HepG2 (cell line): ENCODE measurements at regions of chr20 and their contacts with region 1.

Region 1: GRCh38 chr20:59222253-59223181 is 58.9 kb downstream of the ZNF831 start:
- DNase-seq: peak; percentile 55
- ATAC-seq: peak; percentile 98
- H3K4me3 ChIP-seq: peak overlapping the region; percentile 20 to 51 (median 46); a peak in 4 of 6 replicates
- H3K27ac ChIP-seq: no peak overlapping the region
- H3K4me1 ChIP-seq: peaks cover 6% of the 10 kb centered on the region; the same call in 1 of the 2 replicates
- H3K27me3 ChIP-seq: peaks cover 13 to 68% of the 10 kb centered on the region in 2 experiments
- CTCF ChIP-seq: peak; percentile 95
- EP300 ChIP-seq: no peak
- POLR2A ChIP-seq: no peak
- RAD21 ChIP-seq: peak; percentile 93

Region 2: DNA sequence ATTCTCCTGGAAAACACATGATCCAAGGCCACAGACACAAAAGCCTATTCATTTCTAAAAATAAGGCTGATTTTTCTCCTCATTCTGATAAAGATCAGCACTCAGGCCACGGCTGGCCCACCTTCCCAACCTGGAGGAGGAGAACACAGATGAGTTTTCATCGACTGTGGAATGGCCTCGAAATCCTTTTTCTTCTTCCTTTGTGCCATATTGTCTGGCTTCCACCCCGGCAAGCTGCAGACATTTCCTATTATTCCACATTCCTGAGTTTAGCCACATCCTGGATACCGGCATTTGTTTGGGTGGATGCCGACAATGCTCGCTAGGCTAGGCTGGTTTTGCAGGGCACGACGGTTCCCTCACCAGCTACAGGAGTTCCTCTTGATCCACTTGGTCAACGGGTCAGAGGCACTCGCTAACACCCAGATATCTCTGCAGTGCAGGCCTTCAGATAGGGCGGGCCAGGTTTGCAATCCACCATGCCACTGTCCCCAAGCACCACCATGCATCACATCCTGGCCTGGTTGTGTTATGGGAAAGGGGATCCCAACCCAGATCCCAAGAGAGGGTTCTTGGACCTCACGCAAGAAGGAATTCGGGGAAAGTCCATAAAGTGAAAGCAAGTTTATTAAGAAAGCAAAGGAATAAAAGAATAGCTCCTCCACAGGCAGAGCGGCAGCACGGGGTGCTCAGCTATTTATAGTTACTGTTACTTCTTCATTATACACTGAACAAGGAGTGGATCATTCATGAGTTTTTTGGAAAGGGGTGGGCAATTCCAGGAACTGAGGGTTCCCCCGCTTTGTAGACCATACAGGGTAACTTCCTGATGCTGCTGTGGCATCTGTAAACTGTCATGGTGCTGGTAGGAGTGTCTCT is 211.3 kb before region 1 on chr20:
- CTCF ChIA-PET with region 1: no interaction called
- POLR2A ChIA-PET with region 1: no interaction called
- in situ Hi-C with region 1: no loop called
- intact Hi-C with region 1: no loop called
- DNase-seq: peak; percentile 78
- ATAC-seq: peak; percentile 1; the same call in 1 of the 3 replicates
- H3K4me3 ChIP-seq: no peak overlapping the region
- H3K27ac ChIP-seq: peak overlapping the region; percentile 12
- H3K4me1 ChIP-seq: peaks cover 93% of the 10 kb centered on the region
- H3K27me3 ChIP-seq: no peaks in the 10 kb centered on the region
- CTCF ChIP-seq: no peak
- EP300 ChIP-seq: no peak; a peak in 1 of 4 replicates
- POLR2A ChIP-seq: no peak
- RAD21 ChIP-seq: no peak

Region 3: DNA sequence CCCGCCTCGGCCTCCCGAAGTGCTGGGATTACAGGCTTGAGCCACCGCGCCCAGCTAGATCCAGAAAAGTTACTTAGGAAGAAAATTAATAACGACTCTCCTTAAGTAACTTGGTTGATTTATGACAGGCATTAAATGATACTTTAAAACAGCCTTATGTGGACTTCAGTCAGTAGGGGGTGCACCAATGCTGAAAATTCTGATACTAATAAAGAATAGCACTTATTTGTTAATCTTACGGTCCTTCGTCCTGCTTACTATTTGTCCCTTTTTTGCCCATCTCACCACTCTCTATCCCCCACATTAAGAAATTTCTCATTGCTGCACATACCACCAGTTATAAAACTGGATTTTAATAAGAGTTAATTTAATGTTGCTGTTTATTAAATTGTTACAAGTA is 167.2 kb before region 1 on chr20:
- CTCF ChIA-PET with region 1: no interaction called
- POLR2A ChIA-PET with region 1: no interaction called
- in situ Hi-C with region 1: no loop called
- intact Hi-C with region 1: loop called (anchors 1 kb)
- DNase-seq: no peak
- ATAC-seq: no peak
- H3K4me3 ChIP-seq: no peak overlapping the region
- H3K27ac ChIP-seq: no peak overlapping the region
- H3K4me1 ChIP-seq: no peaks in the 10 kb centered on the region
- H3K27me3 ChIP-seq: peaks cover 0 to 9% of the 10 kb centered on the region in 2 experiments; a peak in 1 of 5 replicates
- CTCF ChIP-seq: 0 out of 2 replicates have a peak, but pooled peaks have one; percentile 14
- EP300 ChIP-seq: no peak
- POLR2A ChIP-seq: no peak
- RAD21 ChIP-seq: no peak

Region 4: GRCh38 chr20:59495894-59496510 is 273.5 kb after region 1 on chr20:
- CTCF ChIA-PET with region 1: no interaction called
- POLR2A ChIA-PET with region 1: no interaction called
- in situ Hi-C with region 1: no loop called
- intact Hi-C with region 1: loop called (anchors 5 kb)
- DNase-seq: peak; percentile 64
- ATAC-seq: peak; percentile 87
- H3K4me3 ChIP-seq: no peak overlapping the region
- H3K27ac ChIP-seq: no peak overlapping the region
- H3K4me1 ChIP-seq: no peaks in the 10 kb centered on the region
- H3K27me3 ChIP-seq: peaks cover 6 to 33% of the 10 kb centered on the region in 2 experiments
- CTCF ChIP-seq: peak; percentile 92
- EP300 ChIP-seq: no peak
- POLR2A ChIP-seq: no peak
- RAD21 ChIP-seq: peak; percentile 76